ENCODE measurements at regions of chr2 and their contacts with region 1.

Region 1: GRCh38 chr2:226835796-226836547 is at the start of gene RHBDD1:
- DNase-seq: peak; percentile 93
- H3K4me3 Mint-ChIP-seq: peak within 1 kb of the TSS; percentile 92
- H3K27ac Mint-ChIP-seq: peak within 1 kb of the TSS; percentile 99
- H3K4me1 Mint-ChIP-seq: peaks cover 62% of the 10 kb centered on the region
- H3K27me3 Mint-ChIP-seq: no peaks in the 10 kb centered on the region
- total RNA-seq, gene RHBDD1: 39.9 and 48.0 TPM in 2 replicates

Region 2: DNA sequence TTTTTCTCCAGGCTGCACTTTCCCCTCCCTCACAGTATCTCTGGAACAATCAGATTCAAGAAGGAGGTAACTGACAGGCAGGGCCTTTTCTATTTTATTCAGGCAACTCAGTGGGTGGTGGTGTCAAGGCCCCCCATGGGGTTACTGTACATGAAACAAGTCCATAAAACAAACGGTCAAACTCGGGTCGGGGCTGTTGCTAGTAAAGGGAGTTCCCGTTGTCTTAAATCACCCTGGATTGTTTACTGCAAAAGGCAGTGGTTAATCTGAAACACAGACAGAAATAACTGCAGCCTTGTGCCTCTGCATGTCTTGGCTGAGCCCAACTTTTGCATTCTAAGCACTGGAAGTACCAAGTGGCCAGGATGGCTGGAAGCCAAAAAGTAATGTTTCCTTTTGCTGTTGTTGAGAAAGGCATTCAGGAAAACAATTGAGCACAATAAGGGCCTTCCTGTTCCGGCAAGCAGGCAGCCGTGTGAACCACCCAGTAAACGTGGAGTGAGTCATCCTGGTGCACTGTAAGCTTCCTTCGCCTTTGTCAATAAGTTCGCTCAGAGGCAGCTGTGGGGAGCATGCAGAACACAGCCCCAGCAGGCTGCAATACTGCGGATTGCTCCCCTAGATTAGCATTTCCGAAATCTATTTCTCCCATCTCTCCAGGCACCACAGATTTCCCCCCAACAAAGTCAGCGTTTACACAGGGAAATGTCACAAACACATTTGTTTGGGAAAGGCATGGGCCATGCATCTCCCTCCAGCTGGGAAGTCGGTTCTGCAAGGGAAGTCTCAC is 185.9 kb before region 1 on chr2:
- intact Hi-C with region 1: loop called (anchors 2 kb)
- DNase-seq: peak; percentile 60
- H3K4me3 Mint-ChIP-seq: peak overlapping the region; percentile 59
- H3K27ac Mint-ChIP-seq: peak overlapping the region; percentile 95
- H3K4me1 Mint-ChIP-seq: peaks cover 63% of the 10 kb centered on the region
- H3K27me3 Mint-ChIP-seq: no peaks in the 10 kb centered on the region

Region 3: GRCh38 chr2:226862623-226863022 is 26.7 kb after region 1 on chr2:
- intact Hi-C with region 1: no loop called
- DNase-seq: no peak
- H3K4me3 Mint-ChIP-seq: no peak overlapping the region
- H3K27ac Mint-ChIP-seq: no peak overlapping the region
- H3K4me1 Mint-ChIP-seq: peaks cover 11% of the 10 kb centered on the region
- H3K27me3 Mint-ChIP-seq: no peaks in the 10 kb centered on the region

Region 4: GRCh38 chr2:226873051-226873620 is 37.2 kb after region 1 on chr2:
- intact Hi-C with region 1: loop called (anchors 5 kb)
- DNase-seq: no peak
- H3K4me3 Mint-ChIP-seq: no peak overlapping the region
- H3K27ac Mint-ChIP-seq: peak overlapping the region; percentile 19
- H3K4me1 Mint-ChIP-seq: peaks cover 23% of the 10 kb centered on the region
- H3K27me3 Mint-ChIP-seq: no peaks in the 10 kb centered on the region

Region 5: GRCh38 chr2:226984750-226985582 is 149.0 kb after region 1 on chr2:
- intact Hi-C with region 1: loop called (anchors 1 kb)
- DNase-seq: peak; percentile 9
- H3K4me3 Mint-ChIP-seq: no peak overlapping the region
- H3K27ac Mint-ChIP-seq: no peak overlapping the region
- H3K4me1 Mint-ChIP-seq: peaks cover 21% of the 10 kb centered on the region
- H3K27me3 Mint-ChIP-seq: no peaks in the 10 kb centered on the region

Region 6: GRCh38 chr2:227460070-227460485 is 624.1 kb after region 1 on chr2:
- intact Hi-C with region 1: loop called (anchors 5 kb)
- DNase-seq: peak; percentile 29
- H3K4me3 Mint-ChIP-seq: peak overlapping the region; percentile 59
- H3K27ac Mint-ChIP-seq: peak overlapping the region; percentile 84
- H3K4me1 Mint-ChIP-seq: peaks cover 74% of the 10 kb centered on the region
- H3K27me3 Mint-ChIP-seq: no peaks in the 10 kb centered on the region